ENCODE measurements at regions of chr2 and their contacts with region 1.

Region 1: DNA sequence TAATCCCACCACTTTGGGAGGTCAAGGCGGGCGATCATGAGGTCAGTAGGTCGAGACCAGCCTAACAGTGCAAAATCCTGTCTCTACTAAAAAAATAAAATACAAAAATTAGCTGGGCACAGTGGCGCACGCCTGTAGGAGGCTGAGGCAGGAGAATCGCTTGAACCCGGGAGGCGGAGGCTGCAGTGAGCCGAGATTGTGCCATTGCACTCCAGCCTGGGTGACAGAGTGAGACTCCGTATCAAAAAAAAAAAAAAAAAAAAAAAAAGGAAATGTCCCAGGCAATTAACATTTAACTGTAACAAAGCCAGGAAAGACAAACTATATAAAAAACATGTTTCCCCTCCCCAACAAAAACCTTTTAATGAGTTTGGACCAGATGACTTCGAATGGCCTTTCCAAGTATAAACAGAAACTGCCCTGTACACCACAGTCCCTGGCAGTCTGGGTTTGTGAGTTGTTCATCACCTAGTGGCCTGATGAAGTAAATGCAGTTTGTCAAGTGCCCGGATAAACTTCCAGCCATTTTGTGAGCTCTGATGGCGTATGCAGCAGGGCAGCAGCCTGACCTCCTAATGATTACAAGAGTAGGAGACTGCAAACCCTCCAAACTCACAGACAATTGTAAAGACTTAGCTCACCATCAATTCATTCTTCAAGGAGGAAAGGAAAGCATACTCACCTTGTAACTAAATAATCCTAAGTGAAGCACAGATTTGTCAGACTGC is 16.6 kb upstream of the PCBP1 start:
- DNase-seq: peak; percentile 87
- CTCF ChIP-seq: peak; percentile 79

Region 2: GRCh38 chr2:69196327-69197117 is 874.2 kb before region 1 on chr2:
- CTCF ChIA-PET with region 1: no interaction called
- POLR2A ChIA-PET with region 1: no interaction called
- DNase-seq: no peak
- CTCF ChIP-seq: no peak

Region 3: GRCh38 chr2:69902213-69902922 is 168.3 kb before region 1 on chr2:
- CTCF ChIA-PET with region 1: no interaction called
- POLR2A ChIA-PET with region 1: no interaction called
- DNase-seq: no peak
- CTCF ChIP-seq: no peak

Region 4: GRCh38 chr2:70043252-70043875 is 27.3 kb before region 1 on chr2:
- CTCF ChIA-PET with region 1: interaction called, 14 read pairs
- POLR2A ChIA-PET with region 1: no interaction called
- DNase-seq: no peak
- CTCF ChIP-seq: no peak

Region 5: DNA sequence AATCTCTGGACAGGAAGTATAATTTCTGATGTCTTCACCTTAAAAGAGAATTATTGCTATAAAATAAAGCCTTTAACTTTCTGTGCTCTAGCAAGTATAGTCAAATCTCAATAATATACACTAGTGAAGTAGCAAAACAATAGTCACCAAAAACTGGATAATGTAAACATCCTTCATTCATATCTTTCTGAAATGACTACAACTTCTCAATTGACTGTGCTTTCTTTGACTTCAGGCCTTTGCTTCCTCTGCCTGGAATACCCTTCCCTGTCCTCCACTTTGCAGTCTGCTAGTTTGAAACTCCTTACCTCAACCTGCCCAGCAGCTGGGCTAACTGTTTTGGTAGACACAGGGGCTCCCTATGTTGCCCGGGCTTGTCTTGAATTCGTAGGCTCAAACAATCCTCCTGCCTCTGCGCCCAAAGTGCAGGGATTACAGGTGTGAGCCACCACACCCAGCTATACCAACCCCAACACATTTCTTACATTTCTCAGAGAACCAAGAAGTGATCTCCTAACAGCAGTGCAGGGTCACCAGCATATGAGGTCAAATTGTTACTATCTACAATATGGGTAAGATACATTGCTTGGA is 10.0 kb after region 1 on chr2:
- CTCF ChIA-PET with region 1: interaction called, 92 read pairs
- POLR2A ChIA-PET with region 1: interaction called, 11 read pairs
- DNase-seq: no peak
- CTCF ChIP-seq: no peak

Region 6: DNA sequence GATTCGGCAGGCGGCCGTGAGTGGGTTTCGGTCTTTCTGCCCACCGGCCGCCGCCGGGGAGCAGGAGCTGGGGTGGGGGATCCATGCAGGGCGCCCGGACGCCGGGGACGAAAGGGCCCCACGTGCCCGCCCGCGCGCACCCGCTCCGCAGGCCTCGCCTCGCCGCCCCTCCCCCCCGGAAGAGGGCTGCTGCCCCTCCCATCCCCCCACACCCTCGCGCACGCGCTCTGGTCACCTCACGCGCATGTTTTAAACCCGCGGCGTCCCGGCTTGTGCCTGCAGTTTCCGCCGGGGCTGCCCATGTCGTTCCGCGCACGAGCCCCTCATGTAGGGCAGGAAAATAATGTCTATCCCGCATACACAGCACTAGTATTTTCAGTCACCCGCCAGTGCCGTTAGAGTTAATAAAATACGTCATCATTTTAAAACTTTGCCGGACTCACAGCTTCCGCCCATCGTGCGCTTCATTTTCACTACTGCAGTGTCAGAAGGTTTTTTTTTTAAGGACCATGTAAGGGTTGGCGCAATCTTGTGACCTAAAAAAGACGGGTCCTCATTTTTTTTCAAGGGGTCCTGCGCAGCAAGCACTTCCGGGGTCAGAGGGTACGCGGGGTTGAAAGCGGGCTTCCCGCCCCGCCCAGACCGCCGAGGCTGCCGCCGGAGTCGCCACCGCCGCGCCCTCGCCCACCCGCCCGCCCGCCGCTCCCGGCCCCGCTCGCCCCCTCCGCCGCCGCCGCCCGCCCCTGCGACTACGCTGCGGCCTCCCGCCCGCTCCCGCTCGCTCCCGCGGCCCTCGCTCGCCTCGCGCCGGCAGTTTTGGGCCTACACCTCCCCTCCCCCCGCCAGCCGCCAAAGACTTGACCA is 16.4 kb after region 1 on chr2 and contains the start of gene PCBP1:
- CTCF ChIA-PET with region 1: interaction called, 92 read pairs
- POLR2A ChIA-PET with region 1: interaction called, 11 read pairs
- DNase-seq: peak; percentile 93
- CTCF ChIP-seq: no peak

Region 7: GRCh38 chr2:70124983-70125480 is 54.3 kb after region 1 on chr2:
- CTCF ChIA-PET with region 1: interaction called, 14 read pairs
- POLR2A ChIA-PET with region 1: no interaction called
- DNase-seq: peak; percentile 46
- CTCF ChIP-seq: no peak

Region 8: DNA sequence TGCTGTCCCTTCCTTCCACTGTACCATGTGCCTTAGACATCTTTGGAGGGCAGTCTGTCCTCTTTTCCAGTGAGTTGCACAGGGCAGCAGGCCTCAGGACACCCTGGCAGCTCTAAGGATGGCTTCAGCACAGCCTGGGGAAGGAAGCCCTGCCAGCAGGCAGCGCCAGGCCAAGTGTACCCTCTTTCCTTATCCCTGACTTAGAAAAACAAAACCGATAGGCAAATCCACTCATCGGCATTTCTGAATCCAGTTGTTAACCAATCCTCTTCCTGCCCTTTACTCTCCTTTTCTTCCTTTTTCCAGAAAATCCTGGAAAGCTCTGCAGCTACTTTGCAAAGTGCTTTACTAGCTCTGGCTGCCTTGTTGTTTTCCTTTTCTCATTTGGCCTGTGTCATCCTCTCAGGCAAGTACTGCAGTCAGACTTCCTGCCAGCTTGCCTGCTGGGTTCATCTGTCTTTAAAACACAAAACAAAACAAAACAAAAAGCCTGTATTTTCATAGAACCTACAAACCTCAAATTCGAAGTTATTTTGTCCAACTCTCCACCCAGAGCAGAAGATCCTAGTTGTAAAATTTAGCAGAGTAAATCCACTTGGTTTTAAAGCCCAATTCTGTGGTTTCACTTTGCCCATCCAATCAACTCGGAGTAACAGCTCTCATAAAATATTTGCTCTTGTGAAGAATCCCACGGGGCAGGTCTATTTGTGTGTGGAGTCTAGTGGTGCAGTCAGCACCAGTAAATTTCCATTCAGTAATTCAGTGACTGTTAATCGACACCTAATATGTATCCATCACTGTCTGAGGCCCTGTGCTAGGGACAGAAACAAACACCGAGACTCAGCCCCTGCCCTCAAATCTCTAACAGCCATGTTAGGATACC is 61.8 kb after region 1 on chr2:
- CTCF ChIA-PET with region 1: interaction called, 32 read pairs
- POLR2A ChIA-PET with region 1: no interaction called
- DNase-seq: peak; percentile 56
- CTCF ChIP-seq: no peak

Measured in GM10248 (cell line).